ENCODE measurements at regions of chr3 and their contacts with region 1.

Region 1: DNA sequence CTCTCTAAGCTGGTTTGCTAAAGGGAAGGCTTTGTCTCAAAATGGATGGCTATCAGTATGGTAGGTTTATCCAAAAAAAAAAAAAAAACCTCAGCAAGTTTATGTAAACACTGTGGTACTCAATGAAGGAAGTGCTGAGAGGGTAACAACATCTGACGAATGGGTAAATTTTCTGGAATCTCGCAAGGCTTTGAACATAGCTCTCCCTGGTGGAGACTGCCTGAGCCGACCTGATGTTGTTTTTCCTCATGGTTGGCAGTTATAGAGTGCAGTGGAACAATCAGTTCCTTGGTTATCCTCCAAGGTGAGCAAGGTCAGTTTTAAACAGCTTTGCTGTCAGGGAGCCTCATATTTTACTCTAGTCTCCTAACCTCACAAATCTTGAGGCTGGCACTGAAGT is 94.6 kb downstream of the ZPLD1 start:
- DNase-seq: no peak
- ATAC-seq: peak; percentile 82 to 84

Region 2: DNA sequence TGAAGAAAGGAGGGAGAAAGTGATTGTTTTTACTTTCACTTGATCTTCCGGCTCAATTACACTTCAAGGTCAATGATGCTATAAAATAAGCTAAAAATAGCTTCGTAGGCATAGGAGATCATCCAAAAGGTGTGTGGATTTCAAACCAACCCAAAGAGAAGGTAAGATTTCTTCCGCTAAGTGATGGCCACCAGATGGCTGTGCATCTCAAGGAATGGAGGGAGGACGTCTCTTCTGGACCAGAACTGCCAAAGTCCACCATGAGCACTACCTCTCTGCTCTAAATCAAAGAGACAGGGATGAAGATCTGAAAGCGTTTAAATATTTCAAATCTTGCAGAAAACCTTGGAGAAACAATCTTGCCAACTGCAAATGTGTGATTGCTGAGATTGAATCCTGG is 293.8 kb before region 1 on chr3:
- intact Hi-C with region 1: loop called (anchors 2 to 5 kb)
- DNase-seq: no peak
- ATAC-seq: no peak

Region 3: DNA sequence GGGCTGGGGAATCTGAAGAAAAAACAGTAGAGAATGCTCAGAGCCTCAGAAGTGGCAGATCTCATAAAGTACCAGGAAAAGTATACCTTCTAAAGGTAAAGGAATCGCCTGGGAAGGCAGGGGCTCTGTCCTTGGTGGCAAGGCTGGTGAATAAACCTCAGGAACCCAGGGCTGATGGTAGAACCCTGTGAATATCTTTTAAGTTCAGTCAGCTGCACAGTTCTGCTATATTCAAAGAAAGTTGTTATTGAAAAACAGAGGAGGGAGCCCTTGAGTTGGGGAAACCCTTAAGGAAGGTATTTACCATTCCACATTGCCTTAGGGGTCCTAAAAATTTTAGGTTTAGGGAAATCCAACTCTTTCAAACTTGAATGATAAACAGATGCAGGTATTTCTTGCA is 63.5 kb before region 1 on chr3:
- intact Hi-C with region 1: loop called (anchors 2 to 10 kb)
- DNase-seq: no peak
- ATAC-seq: no peak

Region 4: DNA sequence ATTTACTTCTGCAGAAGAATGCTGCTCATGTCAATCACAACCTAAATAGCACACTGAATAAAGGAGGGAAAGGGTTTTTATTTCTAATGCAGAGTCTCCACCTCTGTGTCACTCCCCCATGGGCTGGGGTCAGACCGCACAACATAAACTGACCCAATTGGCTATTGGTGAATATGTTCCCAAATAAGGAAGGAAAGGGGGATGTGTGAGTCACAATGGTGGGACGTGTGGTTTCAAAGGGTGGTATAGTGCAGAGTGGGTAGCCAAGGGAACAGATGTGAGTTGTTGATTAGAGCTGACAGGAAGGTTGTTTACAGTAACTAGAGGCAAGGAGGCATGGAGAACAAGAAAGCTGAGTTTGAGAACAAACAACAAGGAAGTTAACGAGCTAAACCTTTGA is 397.2 kb after region 1 on chr3:
- intact Hi-C with region 1: no loop called
- DNase-seq: no peak
- ATAC-seq: no peak

Region 5: GRCh38 chr3:103127737-103128136 is 598.3 kb after region 1 on chr3:
- intact Hi-C with region 1: no loop called
- DNase-seq: no peak
- ATAC-seq: no peak

Measured in left cardiac atrium (tissue), 4 donors.